Endothelial cell of umbilical vein (primary cell): ENCODE measurements at regions of chr6 and their contacts with region 1.

Region 1: GRCh38 chr6:135497412-135498269 is at the start of gene AHI1:
- DNase-seq: peak; percentile 97
- H3K4me3 ChIP-seq: peak within 1 kb of the TSS; percentile 96 to 98 (median 96)
- H3K27ac ChIP-seq: peak within 1 kb of the TSS; percentile 99
- H3K4me1 ChIP-seq: peaks cover 23% of the 10 kb centered on the region
- H3K27me3 ChIP-seq: no peaks in the 10 kb centered on the region
- CTCF ChIP-seq: peak in 1 of 2 donors; percentile 3
- POLR2A ChIP-seq: peak; percentile 90
- total RNA-seq, gene AHI1: 19.8 and 20.7 TPM in 2 replicates

Region 2: GRCh38 chr6:135451693-135452092 is 45.9 kb before region 1 on chr6:
- CTCF ChIA-PET with region 1: interaction called, 6 read pairs
- POLR2A ChIA-PET with region 1: no interaction called
- dilution Hi-C with region 1: no loop called
- intact Hi-C with region 1: loop called (anchors 2 kb)
- DNase-seq: peak; percentile 63
- H3K4me3 ChIP-seq: no peak overlapping the region
- H3K27ac ChIP-seq: no peak overlapping the region
- H3K4me1 ChIP-seq: no peaks in the 10 kb centered on the region
- H3K27me3 ChIP-seq: no peaks in the 10 kb centered on the region
- CTCF ChIP-seq: peak; percentile 35 to 42
- POLR2A ChIP-seq: no peak

Region 3: GRCh38 chr6:136249811-136250685 is 752.4 kb after region 1 on chr6 and contains the start of gene MTFR2:
- CTCF ChIA-PET with region 1: no interaction called
- POLR2A ChIA-PET with region 1: interaction called, 3 read pairs
- dilution Hi-C with region 1: no loop called
- intact Hi-C with region 1: loop called (anchors 1 kb)
- DNase-seq: peak; percentile 99
- H3K4me3 ChIP-seq: peak within 1 kb of the TSS; percentile 49 to 97 (median 85)
- H3K27ac ChIP-seq: peak within 1 kb of the TSS; percentile 1
- H3K4me1 ChIP-seq: peaks cover 12% of the 10 kb centered on the region
- H3K27me3 ChIP-seq: no peaks in the 10 kb centered on the region
- CTCF ChIP-seq: no peak
- POLR2A ChIP-seq: peak; percentile 74
- total RNA-seq, gene MTFR2: 7.4 and 7.7 TPM in 2 replicates

Region 4: GRCh38 chr6:136783495-136784270 is 1286.0 kb after region 1 on chr6:
- CTCF ChIA-PET with region 1: no interaction called
- POLR2A ChIA-PET with region 1: no interaction called
- dilution Hi-C with region 1: no loop called
- intact Hi-C with region 1: loop called (anchors 10 kb)
- DNase-seq: no peak
- H3K4me3 ChIP-seq: no peak overlapping the region
- H3K27ac ChIP-seq: no peak overlapping the region
- H3K4me1 ChIP-seq: peaks cover 45% of the 10 kb centered on the region
- H3K27me3 ChIP-seq: no peaks in the 10 kb centered on the region
- CTCF ChIP-seq: no peak
- POLR2A ChIP-seq: no peak